ENCODE measurements at regions of chr13 and their contacts with region 1.

Region 1: GRCh38 chr13:94433055-94433961 is 46.2 kb downstream of the DCT start:
- DNase-seq: no peak
- H3K4me3 ChIP-seq: no peak overlapping the region
- H3K27ac ChIP-seq: no peak overlapping the region
- H3K4me1 ChIP-seq: no peaks in the 10 kb centered on the region
- H3K27me3 ChIP-seq: no peaks in the 10 kb centered on the region
- CTCF ChIP-seq: no peak
- POLR2A ChIP-seq: no peak

Region 2: DNA sequence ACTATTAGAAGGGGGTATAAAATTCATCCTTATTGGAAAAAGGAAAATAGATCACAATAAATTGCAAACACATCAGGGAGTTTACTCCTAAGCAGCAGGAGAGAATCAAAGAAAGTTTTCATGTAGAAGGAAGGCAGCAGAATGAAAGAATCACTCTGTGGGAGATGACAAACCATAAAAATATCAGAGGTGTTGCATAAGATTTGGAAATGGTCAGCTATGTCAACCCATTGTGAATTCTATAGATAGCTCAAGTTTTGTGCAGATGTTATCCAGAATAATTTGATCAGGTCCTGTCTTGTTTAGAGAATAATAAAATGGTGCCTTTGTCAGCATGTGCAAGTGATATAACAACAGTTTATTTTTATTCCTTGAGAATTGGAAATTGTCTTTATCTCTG is 576.2 kb before region 1 on chr13:
- intact Hi-C with region 1: no loop called
- DNase-seq: no peak
- H3K4me3 ChIP-seq: no peak overlapping the region
- H3K27ac ChIP-seq: no peak overlapping the region
- H3K4me1 ChIP-seq: no peaks in the 10 kb centered on the region
- H3K27me3 ChIP-seq: no peaks in the 10 kb centered on the region
- CTCF ChIP-seq: no peak
- POLR2A ChIP-seq: no peak

Region 3: GRCh38 chr13:94389604-94390351 is 43.5 kb before region 1 on chr13:
- intact Hi-C with region 1: no loop called
- DNase-seq: no peak
- H3K4me3 ChIP-seq: no peak overlapping the region
- H3K27ac ChIP-seq: no peak overlapping the region
- H3K4me1 ChIP-seq: no peaks in the 10 kb centered on the region
- H3K27me3 ChIP-seq: no peaks in the 10 kb centered on the region
- CTCF ChIP-seq: no peak
- POLR2A ChIP-seq: no peak

Region 4: DNA sequence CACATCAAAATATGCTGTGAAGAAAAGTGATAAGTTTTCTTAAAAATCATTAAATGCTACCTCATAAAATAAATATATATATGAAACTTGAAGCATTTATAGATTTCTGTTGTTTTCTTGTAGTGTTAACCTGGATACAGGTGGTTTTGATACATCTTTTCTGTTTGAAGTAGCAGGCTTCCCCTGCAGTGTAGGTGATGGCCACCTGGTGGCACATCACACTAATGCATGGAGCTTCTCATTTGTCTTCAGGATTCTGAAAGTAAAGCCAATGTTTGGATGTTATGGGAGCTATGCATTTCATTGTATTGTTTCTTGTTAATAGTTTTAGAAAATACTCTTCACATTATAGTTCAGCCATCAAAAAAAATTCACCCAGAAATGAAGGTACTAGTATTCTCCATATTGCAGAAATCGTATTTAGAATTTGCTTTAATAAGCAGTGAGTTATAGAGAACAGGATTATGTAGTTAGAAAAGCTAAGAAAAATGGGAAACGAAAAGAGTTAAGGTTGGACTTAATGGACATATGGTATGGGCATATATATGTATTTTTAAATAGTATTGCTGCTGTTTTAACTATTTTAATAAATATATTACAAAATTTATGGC is 187.1 kb after region 1 on chr13:
- intact Hi-C with region 1: loop called (anchors 5 kb)
- DNase-seq: no peak
- H3K4me3 ChIP-seq: no peak overlapping the region
- H3K27ac ChIP-seq: no peak overlapping the region
- H3K4me1 ChIP-seq: no peaks in the 10 kb centered on the region
- H3K27me3 ChIP-seq: no peaks in the 10 kb centered on the region
- CTCF ChIP-seq: peak in 1 of 3 experiments; percentile 32
- POLR2A ChIP-seq: no peak

Measured in vagina (tissue), 2 donors.